ENCODE measurements at regions of chr11 and their contacts with region 1.

Region 1: DNA sequence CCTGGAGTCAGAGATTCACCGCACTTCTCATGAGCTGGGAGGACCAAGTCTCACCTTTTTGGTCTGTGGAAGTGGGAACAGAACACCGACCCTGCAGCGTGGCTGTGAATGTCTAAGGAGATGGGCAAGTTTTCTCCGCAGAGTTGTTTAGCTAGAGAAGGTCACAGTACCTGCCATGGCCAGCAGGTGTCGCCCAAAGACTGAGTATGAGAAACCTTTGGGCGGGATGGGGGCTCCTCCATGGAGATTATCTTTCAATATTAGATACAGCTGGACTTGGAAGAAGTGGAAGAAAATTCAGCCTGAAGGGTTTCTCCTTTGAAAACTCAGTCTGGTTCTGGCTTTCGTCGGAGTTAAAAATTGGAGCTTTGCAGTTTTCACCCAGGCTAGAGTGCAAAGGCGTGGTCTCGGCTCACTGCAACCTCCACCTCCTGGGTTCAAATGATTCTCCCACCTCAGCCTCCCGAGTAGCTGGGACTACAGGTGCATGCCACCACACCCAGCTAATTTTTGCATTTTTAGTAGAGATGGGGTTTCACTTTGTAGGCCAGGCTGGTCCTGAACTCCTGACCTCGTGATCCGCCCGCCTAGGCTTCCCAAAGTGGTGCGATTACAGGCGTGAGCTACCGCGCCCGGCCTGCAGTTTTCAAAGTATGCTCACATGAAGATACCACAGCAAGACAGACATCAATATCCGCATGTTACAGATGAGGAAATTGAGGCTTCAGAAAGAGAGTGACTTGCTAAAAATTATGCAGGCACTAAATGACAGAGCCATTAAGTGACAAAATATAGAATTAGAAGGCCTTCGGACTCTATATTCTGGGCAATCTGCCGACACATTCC is 10.7 kb upstream of the DSCAML1 start:
- DNase-seq: peak in 2 of 3 donors; percentile 64 to 79
- H3K4me3 ChIP-seq: no peak overlapping the region
- H3K27ac ChIP-seq: no peak overlapping the region
- H3K4me1 ChIP-seq: peaks cover 0 to 10% (median 8%) of the 10 kb centered on the region in 4 experiments
- H3K27me3 ChIP-seq: peaks cover 0 to 7% (median 2%) of the 10 kb centered on the region in 5 experiments

Region 2: GRCh38 chr11:117426269-117426685 is 381.4 kb before region 1 on chr11:
- CTCF ChIA-PET with region 1: interaction called, 43 read pairs
- POLR2A ChIA-PET with region 1: no interaction called
- DNase-seq: peak; percentile 41 to 62 (median 50)
- H3K4me3 ChIP-seq: no peak overlapping the region
- H3K27ac ChIP-seq: no peak overlapping the region
- H3K4me1 ChIP-seq: no peaks in the 10 kb centered on the region
- H3K27me3 ChIP-seq: peaks cover 0 to 5% (median 0%) of the 10 kb centered on the region in 5 experiments

Region 3: DNA sequence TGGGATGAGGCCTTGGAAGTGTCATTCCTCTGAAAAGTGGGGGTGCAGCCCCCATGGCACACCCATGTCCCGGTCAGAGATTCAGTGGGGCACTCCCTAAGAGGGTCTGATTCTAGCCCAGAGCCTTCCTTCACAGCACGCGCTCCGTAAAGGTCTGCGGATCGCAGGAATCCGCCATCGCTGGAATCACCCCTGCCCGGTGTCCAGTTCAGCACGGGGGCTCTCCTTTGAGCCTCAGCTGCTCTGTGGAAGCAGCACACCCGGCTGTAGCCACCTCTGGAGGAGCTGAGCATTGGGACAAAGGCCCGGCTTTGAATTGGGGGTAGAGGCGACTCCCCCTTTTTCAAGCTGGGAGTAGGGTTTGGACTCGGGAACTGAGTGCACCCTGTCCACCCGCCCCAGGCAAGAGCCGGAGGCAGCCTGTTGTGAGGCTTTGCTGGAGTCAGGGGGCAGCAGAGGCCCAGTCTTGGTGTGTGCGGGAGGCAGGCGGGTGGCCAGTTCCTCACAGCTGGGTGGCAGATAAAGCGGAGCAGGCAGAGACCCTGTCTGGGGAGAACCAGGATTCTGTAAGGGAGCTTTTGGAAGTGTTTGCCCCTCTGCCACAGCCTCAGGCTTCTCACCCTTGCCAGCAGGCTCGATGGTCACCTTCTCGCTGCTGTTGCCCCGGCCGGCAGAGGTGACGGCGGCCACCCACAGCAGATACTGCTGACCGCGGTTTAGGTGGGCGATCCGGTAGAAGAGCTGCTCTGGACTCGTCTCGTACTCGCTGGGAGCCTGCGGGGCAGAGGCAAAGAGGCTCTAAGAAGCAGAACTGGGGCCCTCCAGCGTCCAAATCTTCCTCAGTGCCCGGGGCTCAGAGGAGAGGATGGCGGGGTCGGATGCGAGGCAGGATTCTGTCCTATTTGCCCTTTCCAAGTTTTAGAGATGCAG is 364.2 kb before region 1 on chr11:
- CTCF ChIA-PET with region 1: interaction called, 17 read pairs
- POLR2A ChIA-PET with region 1: no interaction called
- DNase-seq: peak; percentile 66 to 80 (median 79)
- H3K4me3 ChIP-seq: peak overlapping the region in 2 of 7 experiments; percentile 3 to 28
- H3K27ac ChIP-seq: no peak overlapping the region
- H3K4me1 ChIP-seq: peaks cover 0 to 7% (median 0%) of the 10 kb centered on the region in 4 experiments
- H3K27me3 ChIP-seq: peaks cover 0 to 13% (median 8%) of the 10 kb centered on the region in 5 experiments

Region 4: GRCh38 chr11:117535261-117535781 is 272.4 kb before region 1 on chr11:
- CTCF ChIA-PET with region 1: no interaction called
- POLR2A ChIA-PET with region 1: no interaction called
- DNase-seq: no peak
- H3K4me3 ChIP-seq: no peak overlapping the region
- H3K27ac ChIP-seq: no peak overlapping the region
- H3K4me1 ChIP-seq: no peaks in the 10 kb centered on the region
- H3K27me3 ChIP-seq: peaks cover 0 to 4% (median 0%) of the 10 kb centered on the region in 5 experiments

Region 5: GRCh38 chr11:117796872-117797529 is 10.7 kb before region 1 on chr11 and contains the start of gene DSCAML1:
- CTCF ChIA-PET with region 1: interaction called, 28 read pairs
- POLR2A ChIA-PET with region 1: no interaction called
- DNase-seq: peak in 2 of 3 donors; percentile 25 to 34
- H3K4me3 ChIP-seq: peak within 1 kb of the TSS in 4 of 7 experiments; percentile 11 to 49 (median 25)
- H3K27ac ChIP-seq: no peak within 1 kb of the TSS
- H3K4me1 ChIP-seq: peaks cover 0 to 20% (median 12%) of the 10 kb centered on the region in 4 experiments
- H3K27me3 ChIP-seq: peaks cover 0 to 82% (median 40%) of the 10 kb centered on the region in 5 experiments

Region 6: GRCh38 chr11:117843666-117844484 is 36.2 kb after region 1 on chr11:
- CTCF ChIA-PET with region 1: interaction called, 14 read pairs
- POLR2A ChIA-PET with region 1: no interaction called
- DNase-seq: peak; percentile 59 to 80 (median 73)
- H3K4me3 ChIP-seq: no peak overlapping the region
- H3K27ac ChIP-seq: no peak overlapping the region
- H3K4me1 ChIP-seq: peaks cover 0 to 18% (median 14%) of the 10 kb centered on the region in 4 experiments
- H3K27me3 ChIP-seq: no peaks in the 10 kb centered on the region

Region 7: DNA sequence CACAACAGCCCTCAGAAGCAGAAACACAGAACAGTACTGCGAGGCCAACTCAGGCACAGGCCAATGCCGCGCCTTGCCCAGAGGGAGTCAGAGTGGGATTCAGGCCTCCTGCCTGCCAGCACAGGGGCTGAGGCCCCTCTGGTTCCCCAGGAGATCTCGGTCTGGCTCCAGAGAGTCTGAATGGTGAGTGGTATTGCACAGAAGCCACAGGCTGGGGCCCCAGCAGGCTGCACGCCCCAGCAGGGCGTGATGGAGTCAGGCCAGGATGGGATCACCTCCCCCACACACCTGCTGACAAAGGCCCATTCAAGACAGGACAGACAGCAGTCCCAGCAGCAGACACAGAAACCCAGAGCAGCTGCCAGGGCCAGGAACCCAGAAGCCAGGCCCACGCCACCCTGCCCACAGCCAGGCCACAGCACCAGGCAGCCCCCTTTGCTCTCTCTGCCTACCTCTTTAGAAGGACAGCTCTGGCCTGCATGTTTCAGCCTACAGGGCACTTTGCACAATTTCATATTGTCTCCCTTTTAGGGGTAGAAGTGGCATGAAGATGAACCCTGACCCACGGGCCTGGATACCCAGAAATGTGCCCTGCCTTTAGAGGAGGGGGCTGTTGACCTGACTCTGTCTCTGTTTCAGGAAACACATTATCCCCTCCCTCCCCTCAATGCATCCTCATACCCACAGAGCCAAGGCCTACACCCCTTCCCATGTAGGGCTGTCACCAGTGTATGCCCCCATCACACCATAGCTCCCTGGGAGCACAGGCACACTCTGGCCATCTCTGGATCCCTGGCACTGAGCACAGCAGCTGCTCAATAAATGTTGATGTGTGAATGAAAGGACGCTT is 62.6 kb after region 1 on chr11:
- CTCF ChIA-PET with region 1: no interaction called
- POLR2A ChIA-PET with region 1: no interaction called
- DNase-seq: no peak
- H3K4me3 ChIP-seq: no peak overlapping the region
- H3K27ac ChIP-seq: no peak overlapping the region
- H3K4me1 ChIP-seq: peaks cover 8 to 34% (median 29%) of the 10 kb centered on the region in 4 experiments
- H3K27me3 ChIP-seq: peaks cover 0 to 4% (median 0%) of the 10 kb centered on the region in 5 experiments

Region 8: DNA sequence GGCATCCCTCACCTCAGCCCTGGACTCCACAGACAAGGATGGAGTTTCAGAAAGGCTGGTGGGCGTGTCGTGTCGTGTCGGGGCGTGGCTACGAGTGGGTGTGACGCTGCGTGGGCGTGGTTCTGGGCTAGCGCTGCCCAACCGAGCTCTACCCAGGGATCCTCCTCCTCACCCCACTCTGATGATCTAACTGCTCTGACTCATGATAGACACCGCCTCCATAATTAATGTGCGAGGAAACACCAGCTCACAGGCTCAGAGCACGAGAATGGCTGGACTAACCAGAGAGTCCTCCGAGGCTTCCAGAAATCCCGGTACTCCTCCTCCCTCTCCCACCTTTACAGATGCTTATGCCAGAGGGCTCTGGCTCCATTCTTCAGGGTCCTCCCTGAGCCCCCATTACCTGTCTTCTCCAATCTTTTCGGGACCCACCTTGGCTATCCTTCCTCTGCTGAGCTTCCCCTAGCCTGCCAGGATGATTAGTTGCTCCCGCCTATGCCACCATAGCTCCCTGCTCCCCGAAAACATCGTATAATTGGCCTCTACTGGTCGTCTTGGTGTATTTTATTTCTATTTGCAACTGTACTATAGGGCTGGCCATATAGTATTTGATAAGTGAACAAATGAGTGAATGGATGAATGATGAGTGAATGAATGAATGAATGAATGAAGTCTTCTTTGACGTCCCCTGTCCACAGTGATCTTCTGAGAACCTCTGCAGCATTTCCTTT is 99.7 kb after region 1 on chr11:
- CTCF ChIA-PET with region 1: interaction called, 14 read pairs
- POLR2A ChIA-PET with region 1: no interaction called
- DNase-seq: peak; percentile 75 to 92 (median 91)
- H3K4me3 ChIP-seq: peak overlapping the region in 3 of 7 experiments; percentile 13 to 57 (median 14)
- H3K27ac ChIP-seq: peak overlapping the region in 1 of 2 experiments; percentile 58
- H3K4me1 ChIP-seq: peaks cover 0 to 27% (median 7%) of the 10 kb centered on the region in 4 experiments
- H3K27me3 ChIP-seq: no peaks in the 10 kb centered on the region

Region 9: GRCh38 chr11:118051611-118052461 is 244.1 kb after region 1 on chr11:
- CTCF ChIA-PET with region 1: interaction called, 10 read pairs
- POLR2A ChIA-PET with region 1: no interaction called
- DNase-seq: peak in 2 of 3 donors; percentile 35 to 43
- H3K4me3 ChIP-seq: no peak overlapping the region
- H3K27ac ChIP-seq: no peak overlapping the region
- H3K4me1 ChIP-seq: peaks cover 0 to 28% (median 6%) of the 10 kb centered on the region in 4 experiments
- H3K27me3 ChIP-seq: no peaks in the 10 kb centered on the region

Measured in common myeloid progenitor, CD34-positive (primary cell).